ENCODE measurements at regions of chr9 and their contacts with region 1.

Region 1: GRCh38 chr9:88173378-88173999 is 35.2 kb upstream of the SPATA31C2 start:
- DNase-seq: peak; percentile 27 to 46
- ATAC-seq: peak in 5 of 8 donors; percentile 28 to 77 (median 45)
- H3K4me3 ChIP-seq: no peak overlapping the region
- H3K27ac ChIP-seq: no peak overlapping the region
- H3K4me1 ChIP-seq: no peaks in the 10 kb centered on the region
- H3K27me3 ChIP-seq: no peaks in the 10 kb centered on the region
- CTCF ChIP-seq: peak in 8 of 9 donors; percentile 49 to 88 (median 70)

Region 2: GRCh38 chr9:88399966-88400365 is 226.5 kb after region 1 on chr9:
- intact Hi-C with region 1: loop called in 1 of 10 experiments (anchors 10 kb)
- DNase-seq: no peak
- ATAC-seq: peak in 1 of 8 donors; percentile 33
- H3K4me3 ChIP-seq: no peak overlapping the region
- H3K27ac ChIP-seq: no peak overlapping the region
- H3K4me1 ChIP-seq: peaks cover 0 to 45% (median 18%) of the 10 kb centered on the region in 9 donors
- H3K27me3 ChIP-seq: no peaks in the 10 kb centered on the region
- CTCF ChIP-seq: no peak